Astrocyte of the cerebellum (primary cell): ENCODE measurements at regions of chr15 and their contacts with region 1.

Region 1: GRCh38 chr15:84702961-84703482 is 12.9 kb downstream of the SEC11A start:
- DNase-seq: no peak
- H3K4me3 ChIP-seq: no peak overlapping the region
- CTCF ChIP-seq: no peak

Region 2: GRCh38 chr15:83794209-83794608 is 908.8 kb before region 1 on chr15:
- in situ Hi-C with region 1: no loop called
- DNase-seq: no peak
- H3K4me3 ChIP-seq: no peak overlapping the region
- CTCF ChIP-seq: no peak

Region 3: GRCh38 chr15:84659904-84660781 is 42.9 kb before region 1 on chr15:
- in situ Hi-C with region 1: loop called (anchors 5 kb)
- DNase-seq: no peak
- H3K4me3 ChIP-seq: no peak overlapping the region
- CTCF ChIP-seq: no peak

Region 4: GRCh38 chr15:84671211-84671610 is 31.8 kb before region 1 on chr15:
- in situ Hi-C with region 1: no loop called
- DNase-seq: peak; percentile 85
- H3K4me3 ChIP-seq: no peak overlapping the region
- CTCF ChIP-seq: no peak

Region 5: DNA sequence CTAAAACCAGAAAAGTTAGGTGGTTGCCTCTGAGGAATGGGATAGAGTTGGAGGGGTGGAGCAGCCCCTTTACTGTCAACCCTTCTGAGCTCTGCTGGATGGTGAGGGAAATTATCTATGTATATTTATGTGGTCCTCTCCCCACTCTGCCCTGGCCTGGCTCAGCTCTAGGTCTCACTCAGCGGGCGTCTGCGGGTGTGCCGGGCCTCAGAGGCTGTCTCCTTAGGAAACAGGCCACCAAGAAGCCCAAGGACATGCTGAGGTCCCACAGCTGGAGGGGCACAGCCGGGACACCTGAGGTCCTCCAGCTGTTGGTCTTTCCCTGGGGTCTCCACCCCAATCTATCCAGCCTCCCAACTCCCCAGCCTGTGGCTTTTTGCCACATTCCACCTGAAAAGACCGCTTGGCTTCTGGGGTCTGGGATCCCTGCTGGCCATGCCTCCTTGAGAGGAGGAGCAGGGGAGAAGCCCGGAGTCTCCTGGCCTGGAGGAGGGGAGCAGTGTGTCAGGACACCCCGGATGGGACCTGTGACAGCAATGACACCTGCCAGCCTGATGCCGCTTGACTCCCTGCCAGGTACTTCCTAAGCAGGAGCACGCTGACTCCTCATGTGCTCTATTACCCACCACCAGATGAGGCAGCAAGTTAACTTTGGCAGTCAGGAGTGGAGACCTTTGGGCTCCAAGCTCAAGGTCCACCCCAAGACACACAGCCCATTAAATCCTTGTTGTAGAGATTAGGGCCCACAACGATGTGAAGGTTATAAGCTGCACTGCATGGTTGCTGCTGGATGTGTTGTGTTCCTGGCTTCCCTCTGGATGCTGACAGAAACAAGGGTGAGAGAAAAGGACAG is 181.1 kb after region 1 on chr15 and contains the start of gene SLC28A1:
- in situ Hi-C with region 1: no loop called
- DNase-seq: no peak
- H3K4me3 ChIP-seq: no peak within 1 kb of the TSS
- CTCF ChIP-seq: no peak